Natural killer cell (primary cell): ENCODE measurements at regions of chr21 and their contacts with region 1.

Region 1: GRCh38 chr21:42220138-42220701 is 1.3 kb downstream of the ABCG1 start:
- DNase-seq: peak; percentile 67 to 96
- ATAC-seq: peak; percentile 81 to 91 (median 84)
- H3K4me3 ChIP-seq: peak overlapping the region; percentile 64
- H3K4me3 Mint-ChIP-seq: peak overlapping the region; percentile 95
- H3K27ac ChIP-seq: peak overlapping the region; percentile 74
- H3K27ac Mint-ChIP-seq: peak overlapping the region; percentile 77 to 92
- H3K4me1 ChIP-seq: peaks cover 35% of the 10 kb centered on the region
- H3K4me1 Mint-ChIP-seq: peaks cover 17 to 28% of the 10 kb centered on the region in 2 donors
- H3K27me3 ChIP-seq: no peaks in the 10 kb centered on the region
- H3K27me3 Mint-ChIP-seq: peaks cover 0 to 8% of the 10 kb centered on the region in 2 donors
- CTCF ChIP-seq: no peak

Region 2: GRCh38 chr21:42125571-42126544 is 94.4 kb before region 1 on chr21:
- intact Hi-C with region 1: no loop called
- DNase-seq: no peak
- ATAC-seq: peak in 1 of 3 donors; percentile 38
- H3K4me3 ChIP-seq: no peak overlapping the region
- H3K4me3 Mint-ChIP-seq: no peak overlapping the region
- H3K27ac ChIP-seq: no peak overlapping the region
- H3K27ac Mint-ChIP-seq: no peak overlapping the region
- H3K4me1 ChIP-seq: peaks cover 8% of the 10 kb centered on the region
- H3K4me1 Mint-ChIP-seq: no peaks in the 10 kb centered on the region
- H3K27me3 ChIP-seq: peaks cover 4% of the 10 kb centered on the region
- H3K27me3 Mint-ChIP-seq: peaks cover 13 to 30% of the 10 kb centered on the region in 2 donors
- CTCF ChIP-seq: no peak

Region 3: DNA sequence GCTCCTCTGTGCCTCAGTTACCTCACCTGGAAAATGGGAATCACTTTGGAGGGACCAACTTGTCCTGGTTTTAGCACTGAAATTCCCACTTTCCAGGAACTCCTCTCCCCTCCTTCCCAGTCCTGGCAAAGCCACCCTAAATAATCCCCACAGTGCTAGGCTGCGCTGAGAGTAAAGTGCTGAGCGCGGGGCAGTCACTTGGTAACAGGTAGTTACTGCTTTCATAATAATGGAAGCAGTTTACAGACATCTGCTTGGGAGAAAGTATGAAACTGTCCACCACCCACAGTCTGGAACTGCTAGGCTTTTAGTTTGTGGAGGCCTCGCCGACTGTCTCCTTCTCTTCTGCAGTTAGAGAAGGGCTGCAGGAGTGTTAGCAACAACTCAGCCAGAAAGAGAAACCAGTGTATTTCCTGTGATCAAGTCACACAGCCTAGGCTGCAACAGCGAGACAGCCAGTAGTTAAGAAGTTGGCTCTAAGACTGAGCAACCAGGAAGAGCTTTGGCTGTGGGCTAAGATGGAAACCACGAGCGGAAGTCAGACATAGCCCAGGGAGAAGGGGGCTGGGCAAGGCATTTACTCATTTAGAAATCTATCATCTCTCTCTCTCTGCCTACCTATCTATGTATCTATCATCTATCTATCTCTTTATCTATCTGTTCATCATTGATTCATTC is 32.1 kb before region 1 on chr21:
- intact Hi-C with region 1: loop called (anchors 1 kb)
- DNase-seq: peak; percentile 70 to 94
- ATAC-seq: peak; percentile 75 to 93 (median 83)
- H3K4me3 ChIP-seq: no peak overlapping the region
- H3K4me3 Mint-ChIP-seq: peak overlapping the region; percentile 22
- H3K27ac ChIP-seq: peak overlapping the region; percentile 89
- H3K27ac Mint-ChIP-seq: peak overlapping the region; percentile 77 to 87
- H3K4me1 ChIP-seq: peaks cover 81% of the 10 kb centered on the region
- H3K4me1 Mint-ChIP-seq: peaks cover 75% of the 10 kb centered on the region in 2 donors
- H3K27me3 ChIP-seq: no peaks in the 10 kb centered on the region
- H3K27me3 Mint-ChIP-seq: no peaks in the 10 kb centered on the region
- CTCF ChIP-seq: no peak